Prostate gland (tissue), 2 donors: ENCODE measurements at regions of chrX and their contacts with region 1.

Region 1: DNA sequence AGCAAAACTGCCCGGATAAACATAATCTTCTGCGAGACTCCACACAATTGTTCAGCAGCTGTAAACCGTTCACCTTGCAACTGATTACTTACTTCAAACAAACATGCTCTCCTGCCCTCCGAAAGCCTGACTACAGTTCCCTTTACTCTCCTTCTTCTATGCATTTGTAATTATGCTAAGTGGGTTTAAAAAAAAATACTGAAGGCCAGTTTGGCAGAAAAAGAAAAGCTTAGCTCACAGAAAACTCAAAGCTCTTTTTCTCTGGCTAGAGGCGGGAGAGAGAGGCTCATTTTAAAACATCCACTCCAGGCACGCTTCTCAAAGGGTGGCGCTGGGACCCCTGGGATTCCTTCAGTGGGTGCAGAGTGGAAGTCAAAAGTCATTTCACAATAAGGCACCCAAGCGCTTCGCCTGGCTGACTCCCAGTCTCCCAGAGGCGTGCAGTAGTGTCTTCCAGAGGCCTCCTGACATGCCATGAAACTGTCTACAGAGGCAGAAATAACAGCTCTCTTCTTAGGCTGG is 1.9 kb downstream of the DHRSX start:
- DNase-seq: peak; percentile 37
- H3K4me3 ChIP-seq: peak overlapping the region in 1 of 2 donors; percentile 18
- H3K27ac ChIP-seq: peak overlapping the region; percentile 91 to 96
- H3K4me1 ChIP-seq: peaks cover 9% of the 10 kb centered on the region
- H3K27me3 ChIP-seq: no peaks in the 10 kb centered on the region
- CTCF ChIP-seq: no peak
- POLR2A ChIP-seq: no peak

Region 2: DNA sequence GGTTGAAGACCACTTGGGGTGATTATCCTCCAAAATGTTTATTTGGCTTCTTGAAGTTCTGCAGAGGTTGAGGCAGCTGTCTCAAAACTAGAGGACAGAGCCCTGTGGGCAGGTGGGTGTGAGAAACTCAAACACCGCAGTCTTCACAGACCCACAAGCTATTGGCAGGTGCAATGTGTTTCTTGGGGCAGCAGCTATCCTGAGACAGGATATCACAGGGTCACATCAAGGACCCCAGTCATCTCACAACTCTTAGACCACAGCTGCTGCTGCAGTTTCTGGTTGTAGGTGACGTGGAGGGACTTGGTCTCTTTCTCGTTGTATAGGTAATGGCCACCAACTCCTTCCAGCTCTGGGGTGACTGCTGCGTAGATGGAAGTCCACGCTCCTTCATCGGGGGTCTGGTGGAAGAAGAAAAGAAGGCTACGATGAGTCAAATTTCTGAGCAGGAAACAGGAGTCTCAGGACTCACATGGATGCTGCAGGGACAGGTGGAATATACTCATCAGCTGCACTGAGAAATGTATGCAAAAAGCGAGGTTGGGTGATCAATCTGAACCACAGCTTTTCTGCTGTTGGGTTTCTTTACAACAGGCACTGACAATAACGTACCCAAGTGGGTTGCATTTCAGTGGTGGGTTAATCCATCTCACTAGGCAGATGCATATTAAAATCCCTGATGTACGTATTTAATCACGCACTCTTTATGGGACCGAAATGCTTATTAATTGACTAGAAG is 277.8 kb before region 1 on chrX:
- intact Hi-C with region 1: no loop called
- DNase-seq: no peak
- H3K4me3 ChIP-seq: no peak overlapping the region
- H3K27ac ChIP-seq: no peak overlapping the region
- H3K4me1 ChIP-seq: no peaks in the 10 kb centered on the region
- H3K27me3 ChIP-seq: no peaks in the 10 kb centered on the region
- CTCF ChIP-seq: no peak
- POLR2A ChIP-seq: no peak

Region 3: GRCh38 chrX:2401590-2402360 is 97.1 kb before region 1 on chrX:
- intact Hi-C with region 1: loop called (anchors 5 kb)
- DNase-seq: peak; percentile 72
- H3K4me3 ChIP-seq: peak overlapping the region in 1 of 2 donors; percentile 2
- H3K27ac ChIP-seq: peak overlapping the region; percentile 66 to 68
- H3K4me1 ChIP-seq: no peaks in the 10 kb centered on the region
- H3K27me3 ChIP-seq: no peaks in the 10 kb centered on the region
- CTCF ChIP-seq: no peak
- POLR2A ChIP-seq: no peak